Esophagus squamous epithelium (tissue), 5 donors: ENCODE measurements at regions of chr1 and their contacts with region 1.

Region 1: DNA sequence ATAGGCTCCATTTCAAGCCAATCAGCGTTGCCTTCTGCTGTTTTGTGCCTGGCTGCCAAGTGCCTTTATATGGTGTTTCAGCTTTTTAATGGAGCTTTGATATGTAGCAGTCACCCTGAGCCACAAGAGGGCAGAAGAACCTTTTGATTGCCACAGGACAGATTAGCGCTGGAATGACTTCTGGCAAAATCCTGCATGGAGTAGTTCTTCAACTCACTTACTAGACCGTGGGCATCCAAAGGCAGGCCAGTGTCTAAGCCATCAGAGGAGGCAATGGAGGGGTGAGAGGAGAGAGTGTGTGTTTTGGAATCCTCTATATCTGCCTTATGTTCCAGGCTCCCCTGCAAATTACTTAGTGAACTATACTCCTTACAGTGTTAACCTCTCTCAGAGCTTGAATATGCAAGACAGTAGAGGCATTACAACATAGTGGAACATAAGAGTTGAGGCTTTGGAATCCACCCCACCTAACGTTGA is 56.2 kb downstream of the ST3GAL3 start:
- DNase-seq: no peak
- H3K4me3 ChIP-seq: no peak overlapping the region
- H3K27ac ChIP-seq: no peak overlapping the region
- H3K4me1 ChIP-seq: peaks cover 0 to 36% (median 14%) of the 10 kb centered on the region in 3 donors
- H3K27me3 ChIP-seq: no peaks in the 10 kb centered on the region
- CTCF ChIP-seq: peak; percentile 79 to 95 (median 92)
- POLR2A ChIP-seq: peak in 1 of 4 donors; percentile 19

Region 2: GRCh38 chr1:42681741-42682483 is 1081.6 kb before region 1 on chr1 and contains the start of gene YBX1:
- intact Hi-C with region 1: no loop called
- DNase-seq: peak; percentile 90
- H3K4me3 ChIP-seq: peak within 1 kb of the TSS; percentile 75 to 97 (median 86)
- H3K27ac ChIP-seq: peak within 1 kb of the TSS; percentile 90 to 99 (median 96)
- H3K4me1 ChIP-seq: peaks cover 18 to 54% (median 45%) of the 10 kb centered on the region in 3 donors
- H3K27me3 ChIP-seq: no peaks in the 10 kb centered on the region
- CTCF ChIP-seq: no peak
- POLR2A ChIP-seq: peak in 3 of 4 donors; percentile 63 to 87 (median 79)
- total RNA-seq, gene YBX1: 338 to 569 (median 531) TPM

Region 3: GRCh38 chr1:43729816-43730463 is 33.6 kb before region 1 on chr1:
- intact Hi-C with region 1: no loop called
- DNase-seq: no peak
- H3K4me3 ChIP-seq: no peak overlapping the region
- H3K27ac ChIP-seq: no peak overlapping the region
- H3K4me1 ChIP-seq: peaks cover 0 to 7% (median 0%) of the 10 kb centered on the region in 3 donors
- H3K27me3 ChIP-seq: no peaks in the 10 kb centered on the region
- CTCF ChIP-seq: no peak
- POLR2A ChIP-seq: no peak

Region 4: DNA sequence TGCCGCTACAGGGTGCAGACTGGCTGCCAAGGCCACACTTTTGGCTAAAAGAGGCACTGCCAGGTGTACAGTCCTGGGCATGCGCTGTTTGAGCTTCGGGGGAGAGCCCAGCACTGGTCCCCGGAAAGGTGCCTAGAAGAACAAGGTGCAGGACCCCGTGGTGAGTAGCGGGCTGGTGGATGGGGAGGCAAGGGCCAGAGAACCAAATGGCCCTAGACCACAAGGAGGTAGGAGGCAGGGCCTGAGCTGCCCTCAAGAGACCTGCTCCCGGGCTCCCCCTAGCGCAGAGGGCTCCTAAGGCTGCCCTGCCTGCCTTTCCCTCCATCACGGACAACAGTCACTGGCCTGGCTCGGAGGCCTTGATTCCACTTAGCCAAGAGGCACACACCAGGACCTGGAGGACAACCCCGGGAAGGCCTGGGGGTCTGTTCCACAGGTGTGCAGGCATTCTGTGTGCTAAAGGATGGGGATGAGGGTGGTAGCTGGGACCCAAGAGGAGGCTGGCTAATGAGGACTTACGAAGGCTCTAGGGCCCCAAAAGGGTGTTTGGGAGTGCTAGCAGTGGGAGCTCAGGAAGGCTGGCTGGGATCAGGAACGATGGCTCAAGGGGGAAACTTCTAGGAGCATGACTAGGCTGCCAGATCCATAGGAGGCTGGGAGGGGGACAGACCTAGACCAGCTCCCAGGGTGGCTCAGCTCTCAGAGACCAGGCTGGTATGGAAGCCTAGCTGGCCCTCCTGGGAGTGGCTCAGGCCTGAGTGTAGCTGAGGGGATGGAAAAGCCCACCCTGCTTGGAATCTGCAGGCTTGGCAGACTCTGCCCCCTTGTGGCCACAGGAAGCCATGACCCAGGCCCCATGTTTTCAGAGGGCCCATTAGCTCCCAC is 170.8 kb after region 1 on chr1:
- intact Hi-C with region 1: loop called (anchors 2 kb)
- DNase-seq: no peak
- H3K4me3 ChIP-seq: peak overlapping the region; percentile 22 to 61 (median 44)
- H3K27ac ChIP-seq: peak overlapping the region; percentile 57 to 74 (median 66)
- H3K4me1 ChIP-seq: peaks cover 25 to 88% (median 58%) of the 10 kb centered on the region in 3 donors
- H3K27me3 ChIP-seq: peaks cover 0 to 22% (median 0%) of the 10 kb centered on the region in 4 donors
- CTCF ChIP-seq: peak; percentile 66 to 92 (median 87)
- POLR2A ChIP-seq: no peak

Region 5: DNA sequence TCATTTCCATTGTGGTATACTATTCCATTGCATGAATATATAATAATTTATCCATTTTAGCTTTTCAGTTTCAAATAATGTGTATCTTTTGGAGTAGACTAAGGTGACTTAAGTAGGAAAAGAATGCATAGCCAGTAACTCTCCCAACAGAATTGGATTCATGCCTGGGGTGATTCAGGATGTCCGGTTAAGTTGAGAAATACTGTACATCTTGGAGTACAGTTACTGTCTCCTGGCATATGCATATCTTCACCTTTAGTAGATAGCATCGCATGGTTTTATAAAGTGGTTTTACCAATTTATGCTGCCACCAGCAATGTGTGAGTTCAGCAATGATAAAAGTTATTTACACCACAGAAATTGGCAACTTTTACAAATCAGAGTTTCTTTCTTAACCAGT is 286.3 kb after region 1 on chr1:
- intact Hi-C with region 1: loop called (anchors 10 kb)
- DNase-seq: no peak
- H3K4me3 ChIP-seq: no peak overlapping the region
- H3K27ac ChIP-seq: no peak overlapping the region
- H3K4me1 ChIP-seq: peaks cover 10 to 28% (median 12%) of the 10 kb centered on the region in 3 donors
- H3K27me3 ChIP-seq: peaks cover 0 to 23% (median 0%) of the 10 kb centered on the region in 4 donors
- CTCF ChIP-seq: no peak
- POLR2A ChIP-seq: no peak